ENCODE measurements at regions of chr16 and their contacts with region 1.

Region 1: DNA sequence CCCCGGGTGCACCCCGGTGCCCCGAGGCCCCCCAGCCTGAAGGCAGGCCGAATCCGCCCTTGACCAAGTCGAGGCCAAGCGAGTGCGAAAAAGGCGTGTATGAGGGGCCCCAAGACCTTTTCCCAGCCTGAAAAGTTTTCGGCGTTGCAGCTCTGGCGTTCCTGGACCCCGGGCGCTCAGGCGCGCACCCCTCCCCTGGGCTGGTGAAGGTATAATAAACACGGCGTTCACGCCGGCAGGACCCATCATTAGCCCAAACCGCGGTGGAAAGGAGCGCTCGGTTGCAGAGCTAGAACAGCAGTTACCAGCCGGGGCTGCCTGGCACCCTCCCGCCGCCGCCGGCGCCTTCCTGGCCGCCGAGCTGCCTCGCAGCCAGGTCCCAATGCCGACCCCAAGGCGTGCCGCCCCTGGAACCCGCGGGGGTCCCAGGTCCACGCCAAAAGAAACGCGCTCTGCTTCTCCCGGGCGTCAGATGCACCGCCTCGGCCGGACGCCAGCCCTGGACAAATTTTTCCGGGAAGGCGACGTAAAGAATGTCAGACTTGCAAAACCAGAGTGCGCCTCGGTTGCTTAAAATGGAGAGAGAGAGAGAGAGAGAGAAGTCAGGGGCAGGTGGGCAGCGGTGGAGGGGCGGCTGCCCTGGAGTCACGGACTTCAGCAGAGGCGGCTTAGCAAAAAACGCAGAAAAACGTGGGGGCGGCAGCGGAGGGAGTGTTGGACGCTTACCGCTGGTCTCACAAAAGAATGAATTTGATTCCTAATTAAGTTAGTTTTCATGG is 11.5 kb upstream of the FOXF1 start:
- DNase-seq: no peak
- H3K4me3 ChIP-seq: peak overlapping the region; percentile 29 to 51 (median 36)
- H3K27ac ChIP-seq: peak overlapping the region; percentile 94 to 99 (median 96)
- H3K4me1 ChIP-seq: peaks cover 0 to 9% (median 4%) of the 10 kb centered on the region in 4 donors
- H3K27me3 ChIP-seq: peaks cover 100% of the 10 kb centered on the region
- CTCF ChIP-seq: no peak
- EP300 ChIP-seq: no peak
- POLR2A ChIP-seq: peak; percentile 10

Region 2: DNA sequence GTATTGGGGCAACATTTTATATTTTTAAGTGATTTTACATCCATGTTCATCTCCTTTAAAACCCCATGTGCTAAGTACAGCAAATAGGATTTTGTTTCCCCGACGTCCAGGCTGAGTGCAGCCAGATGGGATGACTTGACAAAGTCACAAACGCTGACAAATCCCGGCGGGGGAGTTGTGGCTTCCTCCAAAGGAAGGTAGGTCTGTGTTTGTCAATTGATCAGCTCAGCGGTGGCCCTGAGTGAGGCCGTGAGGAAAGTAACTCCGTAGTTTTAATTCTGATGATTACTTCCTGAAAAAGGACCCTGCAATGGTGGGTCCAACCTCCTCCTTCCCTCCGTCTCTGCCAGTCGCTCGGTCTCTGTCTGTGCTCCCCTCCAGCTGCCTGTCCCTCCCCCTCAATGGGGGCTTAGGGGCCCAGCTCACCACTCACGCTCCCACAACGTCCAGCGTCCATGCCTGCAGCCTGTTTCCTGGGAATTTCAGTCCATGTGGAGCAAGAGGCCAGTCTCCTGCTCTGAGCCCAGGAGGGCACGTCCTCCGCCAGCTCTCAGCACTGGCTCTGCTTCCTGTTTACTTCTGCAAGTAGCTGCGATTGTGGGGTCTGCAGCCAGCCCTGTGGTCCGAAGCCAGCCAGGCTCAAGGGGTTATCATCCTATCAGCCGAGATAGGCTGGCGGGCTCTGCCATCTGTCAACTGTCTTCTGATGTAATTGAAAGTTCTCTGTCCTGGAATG is 197.9 kb before region 1 on chr16:
- in situ Hi-C with region 1: loop called in 1 of 4 experiments (anchors 25 kb)
- intact Hi-C with region 1: loop called (anchors 5 kb)
- DNase-seq: no peak
- H3K4me3 ChIP-seq: peak overlapping the region in 1 of 4 donors; percentile 25
- H3K27ac ChIP-seq: peak overlapping the region; percentile 89 to 95 (median 92)
- H3K4me1 ChIP-seq: peaks cover 6 to 34% (median 13%) of the 10 kb centered on the region in 4 donors
- H3K27me3 ChIP-seq: peaks cover 25% of the 10 kb centered on the region
- CTCF ChIP-seq: no peak
- EP300 ChIP-seq: no peak
- POLR2A ChIP-seq: no peak

Region 3: GRCh38 chr16:86424398-86425367 is 74.2 kb before region 1 on chr16:
- in situ Hi-C with region 1: no loop called
- intact Hi-C with region 1: loop called (anchors 10 kb)
- DNase-seq: peak; percentile 25
- H3K4me3 ChIP-seq: no peak overlapping the region
- H3K27ac ChIP-seq: peak overlapping the region; percentile 41 to 82 (median 64)
- H3K4me1 ChIP-seq: peaks cover 0 to 23% (median 5%) of the 10 kb centered on the region in 4 donors
- H3K27me3 ChIP-seq: no peaks in the 10 kb centered on the region
- CTCF ChIP-seq: no peak
- EP300 ChIP-seq: no peak
- POLR2A ChIP-seq: no peak

Region 4: GRCh38 chr16:86462334-86463084 is 36.3 kb before region 1 on chr16:
- in situ Hi-C with region 1: no loop called
- intact Hi-C with region 1: loop called (anchors 2 kb)
- DNase-seq: peak; percentile 56
- H3K4me3 ChIP-seq: no peak overlapping the region
- H3K27ac ChIP-seq: peak overlapping the region; percentile 73 to 84 (median 80)
- H3K4me1 ChIP-seq: peaks cover 5 to 14% (median 9%) of the 10 kb centered on the region in 4 donors
- H3K27me3 ChIP-seq: no peaks in the 10 kb centered on the region
- CTCF ChIP-seq: peak in 2 of 5 experiments; percentile 21 to 45
- EP300 ChIP-seq: peak; percentile 74
- POLR2A ChIP-seq: no peak

Region 5: GRCh38 chr16:86640265-86640843 is 141.5 kb after region 1 on chr16:
- in situ Hi-C with region 1: no loop called
- intact Hi-C with region 1: no loop called
- DNase-seq: no peak
- H3K4me3 ChIP-seq: no peak overlapping the region
- H3K27ac ChIP-seq: no peak overlapping the region
- H3K4me1 ChIP-seq: no peaks in the 10 kb centered on the region
- H3K27me3 ChIP-seq: no peaks in the 10 kb centered on the region
- CTCF ChIP-seq: no peak
- EP300 ChIP-seq: no peak
- POLR2A ChIP-seq: no peak

Measured in transverse colon (tissue), 4 donors.